ENCODE measurements at regions of chr10 and their contacts with region 1.

Region 1: DNA sequence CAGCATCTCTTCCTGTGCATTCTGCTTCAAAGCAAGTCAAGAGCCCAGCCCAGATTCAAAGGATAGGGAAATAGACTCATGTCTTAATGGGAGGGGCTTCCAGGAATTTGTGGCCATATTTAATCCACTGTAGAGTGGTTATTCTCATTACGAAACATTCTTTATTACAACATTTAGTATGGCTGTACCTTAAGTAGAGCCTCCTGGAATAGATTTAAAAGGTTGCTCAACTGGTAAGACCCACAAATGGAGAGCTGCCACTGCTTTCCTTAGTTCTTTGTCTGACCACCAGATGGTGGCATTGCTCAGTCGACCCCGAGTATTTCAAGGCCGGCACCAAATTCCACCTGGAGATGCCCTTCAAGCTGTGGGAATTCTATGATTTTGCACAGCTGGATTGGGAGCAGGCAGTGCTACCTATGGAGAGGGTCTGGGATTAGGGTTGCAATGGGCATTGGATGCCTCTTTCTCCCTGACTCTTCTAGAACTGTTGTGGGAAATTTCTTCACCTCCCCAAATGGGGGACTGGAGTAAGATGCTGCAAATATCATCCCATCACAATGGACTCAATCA is 102.2 kb downstream of the RBM20 start:
- DNase-seq: no peak
- H3K4me3 ChIP-seq: no peak overlapping the region
- H3K27ac ChIP-seq: no peak overlapping the region
- H3K4me1 ChIP-seq: peaks cover 6 to 39% (median 14%) of the 10 kb centered on the region in 4 donors
- H3K27me3 ChIP-seq: no peaks in the 10 kb centered on the region
- CTCF ChIP-seq: peak; percentile 77 to 83 (median 79)
- EP300 ChIP-seq: no peak
- POLR2A ChIP-seq: no peak

Region 2: DNA sequence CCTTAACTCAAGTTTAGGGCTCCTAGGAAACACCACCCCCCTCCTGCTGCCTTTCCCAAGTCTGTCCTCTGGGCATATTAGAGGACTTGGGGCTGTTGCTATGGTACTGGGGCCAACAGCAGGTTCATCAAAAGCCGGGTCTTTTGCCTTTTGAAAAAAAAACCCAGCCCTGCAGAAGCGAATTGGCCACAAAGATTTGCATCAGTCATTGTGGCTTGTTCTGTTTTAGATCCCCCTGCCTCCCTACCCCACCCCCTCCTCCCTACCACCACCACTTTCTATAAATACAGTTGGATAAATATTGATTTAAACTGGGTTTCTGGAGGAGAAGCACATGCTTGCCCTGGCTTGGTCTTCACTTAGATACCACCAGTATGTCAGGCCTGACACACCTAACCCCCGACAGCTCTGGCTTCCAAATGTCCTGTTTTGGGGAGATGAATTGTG is 531.9 kb before region 1 on chr10:
- intact Hi-C with region 1: no loop called
- DNase-seq: peak; percentile 70
- H3K4me3 ChIP-seq: no peak overlapping the region
- H3K27ac ChIP-seq: peak overlapping the region; percentile 82 to 100 (median 98)
- H3K4me1 ChIP-seq: peaks cover 57 to 74% (median 67%) of the 10 kb centered on the region in 4 donors
- H3K27me3 ChIP-seq: no peaks in the 10 kb centered on the region
- CTCF ChIP-seq: no peak
- EP300 ChIP-seq: no peak
- POLR2A ChIP-seq: no peak

Region 3: GRCh38 chr10:110664483-110665420 is 81.6 kb before region 1 on chr10:
- intact Hi-C with region 1: no loop called
- DNase-seq: peak; percentile 64
- H3K4me3 ChIP-seq: no peak overlapping the region
- H3K27ac ChIP-seq: peak overlapping the region in 3 of 4 donors; percentile 36 to 65 (median 49)
- H3K4me1 ChIP-seq: peaks cover 7 to 20% (median 13%) of the 10 kb centered on the region in 4 donors
- H3K27me3 ChIP-seq: no peaks in the 10 kb centered on the region
- CTCF ChIP-seq: no peak
- EP300 ChIP-seq: no peak
- POLR2A ChIP-seq: no peak

Region 4: DNA sequence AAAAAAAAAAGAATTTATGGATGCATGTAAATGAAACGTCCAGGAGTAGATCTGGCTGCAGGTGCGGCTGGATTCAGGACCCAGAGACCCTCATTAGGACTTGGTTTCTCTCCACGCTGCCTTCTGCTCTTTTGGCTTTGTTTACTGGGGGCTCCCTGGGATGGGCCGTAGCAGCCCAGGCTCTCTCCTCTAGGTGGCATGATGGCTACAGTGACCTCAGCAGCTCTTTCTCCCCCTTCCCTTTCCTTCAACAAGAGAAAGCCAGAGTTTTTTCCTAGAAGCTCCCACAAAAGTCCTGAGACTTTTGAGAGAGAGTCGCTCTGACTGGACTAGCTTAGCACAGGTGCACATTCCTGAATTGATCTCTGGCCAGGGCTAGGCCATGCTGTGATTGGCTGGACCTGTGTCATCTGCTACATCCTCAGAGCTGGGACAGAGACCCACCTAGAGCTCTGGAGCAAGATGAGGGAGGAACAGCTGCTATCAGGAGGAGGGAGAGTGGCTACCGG is 57.5 kb after region 1 on chr10:
- intact Hi-C with region 1: loop called (anchors 10 kb)
- DNase-seq: no peak
- H3K4me3 ChIP-seq: no peak overlapping the region
- H3K27ac ChIP-seq: peak overlapping the region in 2 of 4 donors; percentile 69 to 73
- H3K4me1 ChIP-seq: peaks cover 25 to 30% (median 26%) of the 10 kb centered on the region in 4 donors
- H3K27me3 ChIP-seq: no peaks in the 10 kb centered on the region
- CTCF ChIP-seq: peak; percentile 64 to 70 (median 69)
- EP300 ChIP-seq: no peak
- POLR2A ChIP-seq: no peak

Region 5: GRCh38 chr10:110893559-110894179 is 147.3 kb after region 1 on chr10:
- intact Hi-C with region 1: loop called (anchors 2 kb)
- DNase-seq: no peak
- H3K4me3 ChIP-seq: no peak overlapping the region
- H3K27ac ChIP-seq: peak overlapping the region in 1 of 4 donors; percentile 22
- H3K4me1 ChIP-seq: peaks cover 0 to 37% (median 31%) of the 10 kb centered on the region in 4 donors
- H3K27me3 ChIP-seq: no peaks in the 10 kb centered on the region
- CTCF ChIP-seq: peak; percentile 61 to 72 (median 70)
- EP300 ChIP-seq: no peak
- POLR2A ChIP-seq: no peak